ENCODE measurements at regions of chr18 and their contacts with region 1.

Region 1: GRCh38 chr18:49100226-49100968 is 149.6 kb upstream of the SMAD7 start:
- DNase-seq: no peak
- ATAC-seq: no peak
- H3K4me3 ChIP-seq: no peak overlapping the region
- H3K27ac ChIP-seq: no peak overlapping the region
- H3K4me1 ChIP-seq: peaks cover 0 to 16% (median 0%) of the 10 kb centered on the region in 12 donors
- H3K27me3 ChIP-seq: no peaks in the 10 kb centered on the region
- CTCF ChIP-seq: no peak
- POLR2A ChIP-seq: no peak

Region 2: DNA sequence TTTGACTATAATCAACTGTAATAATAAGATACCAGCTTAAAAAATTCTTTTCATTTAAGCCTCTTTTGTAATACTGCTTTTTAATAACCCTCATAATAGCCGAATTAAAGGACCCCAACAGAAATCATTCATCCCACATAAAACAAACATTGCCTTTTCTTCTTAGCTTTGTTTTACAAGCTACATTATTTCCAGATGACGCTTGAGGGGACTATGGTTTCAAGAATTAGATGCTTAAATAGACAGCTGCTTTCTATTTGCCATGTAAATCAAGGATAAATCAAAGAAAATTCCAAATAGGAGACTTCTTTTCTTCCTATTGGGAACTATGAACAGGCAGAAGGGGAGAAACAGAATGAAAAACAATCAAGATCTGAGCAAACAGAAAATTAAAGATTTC is 51.1 kb after region 1 on chr18:
- intact Hi-C with region 1: loop called in 1 of 10 experiments (anchors 2 kb)
- DNase-seq: no peak
- ATAC-seq: no peak
- H3K4me3 ChIP-seq: no peak overlapping the region
- H3K27ac ChIP-seq: no peak overlapping the region
- H3K4me1 ChIP-seq: no peaks in the 10 kb centered on the region
- H3K27me3 ChIP-seq: no peaks in the 10 kb centered on the region
- CTCF ChIP-seq: no peak
- POLR2A ChIP-seq: no peak

Region 3: GRCh38 chr18:49189772-49190171 is 89.4 kb after region 1 on chr18:
- intact Hi-C with region 1: no loop called
- DNase-seq: no peak
- ATAC-seq: no peak
- H3K4me3 ChIP-seq: no peak overlapping the region
- H3K27ac ChIP-seq: no peak overlapping the region
- H3K4me1 ChIP-seq: peaks cover 0 to 29% (median 8%) of the 10 kb centered on the region in 12 donors
- H3K27me3 ChIP-seq: no peaks in the 10 kb centered on the region
- CTCF ChIP-seq: no peak
- POLR2A ChIP-seq: no peak